Activated CD8-positive, alpha-beta T cell treated with anti-CD3 and anti-CD28 coated beads for 36 hours (primary cell): ENCODE measurements at regions of chr13 and their contacts with region 1.

Region 1: GRCh38 chr13:78609464-78610205 is 6.3 kb upstream of the POU4F1 start:
- DNase-seq: no peak
- ATAC-seq: no peak
- H3K4me3 Mint-ChIP-seq: peak overlapping the region; percentile 56
- H3K27ac Mint-ChIP-seq: no peak overlapping the region
- H3K4me1 Mint-ChIP-seq: peaks cover 15% of the 10 kb centered on the region
- H3K27me3 Mint-ChIP-seq: peaks cover 62% of the 10 kb centered on the region
- CTCF ChIP-seq: no peak

Region 2: DNA sequence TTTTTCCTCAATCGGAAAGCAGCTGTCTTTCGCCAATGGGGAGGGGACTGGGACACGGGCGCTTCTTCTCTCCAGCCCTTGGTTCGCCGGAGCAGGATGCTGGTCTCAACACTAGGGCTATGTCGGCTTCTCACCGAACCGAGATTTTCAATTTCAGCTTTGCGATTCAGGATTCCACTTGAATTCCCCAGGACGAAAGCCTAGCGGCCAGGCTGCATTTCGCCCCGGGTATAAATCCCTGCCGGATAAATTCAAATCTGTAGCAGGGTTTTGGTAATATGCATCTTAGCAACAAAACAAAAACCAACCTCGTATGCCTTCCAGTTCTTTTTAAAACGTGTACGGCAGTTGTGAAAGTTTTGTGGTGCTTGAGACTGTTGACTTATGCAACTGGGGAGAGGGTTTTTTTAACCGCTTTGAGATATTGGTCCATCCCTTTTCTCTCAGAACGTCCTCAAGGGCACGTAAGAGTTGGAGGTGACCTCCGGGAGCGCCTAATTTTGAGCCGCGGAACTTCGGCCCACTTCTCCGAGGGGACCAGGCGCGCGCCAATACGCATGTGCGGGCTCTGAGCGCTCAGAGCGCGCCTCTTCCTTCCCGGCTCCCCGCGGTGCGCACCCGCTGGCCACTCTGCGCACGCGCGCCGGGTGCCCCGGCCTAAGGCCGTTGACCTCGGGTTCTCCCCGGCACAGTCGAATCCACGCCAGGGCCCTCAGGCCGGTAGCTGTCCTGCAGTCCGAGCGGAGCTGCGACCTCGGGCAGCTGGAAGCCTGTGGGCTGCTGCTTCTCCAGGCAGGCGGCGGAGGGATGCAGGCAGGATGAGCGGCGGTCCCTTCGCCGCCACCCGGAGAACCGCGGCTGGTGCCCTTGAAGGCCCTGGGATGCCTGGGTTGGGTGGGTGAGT is 13.9 kb before region 1 on chr13:
- CTCF ChIA-PET with region 1: no interaction called
- POLR2A ChIA-PET with region 1: interaction called, 3 read pairs
- intact Hi-C with region 1: loop called (anchors 2 kb)
- DNase-seq: no peak
- ATAC-seq: peak; percentile 74
- H3K4me3 Mint-ChIP-seq: peak overlapping the region; percentile 32
- H3K27ac Mint-ChIP-seq: no peak overlapping the region
- H3K4me1 Mint-ChIP-seq: peaks cover 6% of the 10 kb centered on the region
- H3K27me3 Mint-ChIP-seq: peaks cover 76% of the 10 kb centered on the region
- CTCF ChIP-seq: no peak

Region 3: DNA sequence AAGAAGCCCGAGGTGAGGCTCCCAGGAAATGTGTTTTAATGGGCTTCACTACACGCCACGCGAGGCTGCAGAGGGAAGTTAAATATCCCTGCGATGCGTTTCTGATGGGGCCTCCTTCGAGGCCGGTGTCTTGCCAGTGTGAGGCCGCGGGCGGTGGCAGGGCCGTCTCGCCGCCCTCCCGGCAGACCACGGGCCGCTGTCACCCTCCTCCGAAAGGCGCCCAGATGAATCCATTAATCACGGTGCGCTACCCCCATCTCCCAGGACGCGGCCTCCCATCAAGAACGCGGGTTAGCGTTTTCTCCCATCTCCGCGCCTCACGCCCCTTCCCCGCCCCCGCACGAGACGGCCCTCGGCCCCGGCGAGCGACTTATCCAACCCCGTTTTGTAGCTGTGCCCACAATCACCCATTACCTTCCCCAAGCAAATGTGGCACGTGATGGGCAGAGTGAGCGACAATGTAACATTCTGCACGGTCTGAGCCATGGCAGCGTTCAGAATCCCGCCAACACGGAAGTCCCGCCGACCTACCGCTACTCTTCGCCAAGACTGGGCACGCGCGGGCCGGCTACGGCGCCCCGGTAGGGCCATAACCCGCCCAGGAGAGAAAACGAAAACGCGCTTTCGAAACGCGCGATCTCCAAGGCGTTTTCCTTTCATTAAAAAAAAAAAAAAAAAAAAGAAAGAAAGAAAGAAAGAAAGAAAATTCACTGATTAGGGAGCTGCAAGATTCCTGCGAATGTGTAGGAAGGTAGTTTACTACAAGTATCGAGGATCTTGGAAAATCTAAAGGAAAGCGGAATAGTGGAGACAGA is 49.2 kb after region 1 on chr13 and contains the start of gene OBI1:
- CTCF ChIA-PET with region 1: no interaction called
- POLR2A ChIA-PET with region 1: interaction called, 4 read pairs
- intact Hi-C with region 1: loop called (anchors 5 kb)
- DNase-seq: peak; percentile 93
- ATAC-seq: peak; percentile 95
- H3K4me3 Mint-ChIP-seq: peak within 1 kb of the TSS; percentile 86
- H3K27ac Mint-ChIP-seq: peak within 1 kb of the TSS; percentile 95
- H3K4me1 Mint-ChIP-seq: peaks cover 38% of the 10 kb centered on the region
- H3K27me3 Mint-ChIP-seq: no peaks in the 10 kb centered on the region
- CTCF ChIP-seq: no peak
- total RNA-seq, gene OBI1: 17.5 to 19.1 TPM

Region 4: DNA sequence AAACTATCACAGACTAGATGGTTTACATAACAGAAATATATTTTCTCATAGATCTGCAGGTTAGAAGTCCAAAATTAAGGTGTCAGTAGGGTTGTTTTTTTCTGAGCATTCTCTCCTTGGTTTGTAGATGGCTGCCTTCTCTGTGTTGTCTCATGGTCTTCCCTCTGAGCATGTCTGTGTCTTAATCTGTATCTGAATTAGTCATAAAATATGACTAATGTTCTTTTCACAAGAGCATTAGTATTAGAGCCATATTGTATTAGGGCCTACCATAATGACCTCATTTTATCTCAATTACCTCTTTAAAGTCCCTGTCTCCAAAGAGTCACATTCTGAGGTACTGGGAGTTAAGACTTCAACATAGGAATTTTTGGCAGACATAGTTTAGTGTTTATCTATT is 126.5 kb after region 1 on chr13:
- CTCF ChIA-PET with region 1: no interaction called
- POLR2A ChIA-PET with region 1: no interaction called
- intact Hi-C with region 1: no loop called
- DNase-seq: no peak
- ATAC-seq: no peak
- H3K4me3 Mint-ChIP-seq: no peak overlapping the region
- H3K27ac Mint-ChIP-seq: no peak overlapping the region
- H3K4me1 Mint-ChIP-seq: no peaks in the 10 kb centered on the region
- H3K27me3 Mint-ChIP-seq: peaks cover 8% of the 10 kb centered on the region
- CTCF ChIP-seq: no peak